CD8-positive, alpha-beta memory T cell (primary cell): ENCODE measurements at regions of chr10 and their contacts with region 1.

Region 1: DNA sequence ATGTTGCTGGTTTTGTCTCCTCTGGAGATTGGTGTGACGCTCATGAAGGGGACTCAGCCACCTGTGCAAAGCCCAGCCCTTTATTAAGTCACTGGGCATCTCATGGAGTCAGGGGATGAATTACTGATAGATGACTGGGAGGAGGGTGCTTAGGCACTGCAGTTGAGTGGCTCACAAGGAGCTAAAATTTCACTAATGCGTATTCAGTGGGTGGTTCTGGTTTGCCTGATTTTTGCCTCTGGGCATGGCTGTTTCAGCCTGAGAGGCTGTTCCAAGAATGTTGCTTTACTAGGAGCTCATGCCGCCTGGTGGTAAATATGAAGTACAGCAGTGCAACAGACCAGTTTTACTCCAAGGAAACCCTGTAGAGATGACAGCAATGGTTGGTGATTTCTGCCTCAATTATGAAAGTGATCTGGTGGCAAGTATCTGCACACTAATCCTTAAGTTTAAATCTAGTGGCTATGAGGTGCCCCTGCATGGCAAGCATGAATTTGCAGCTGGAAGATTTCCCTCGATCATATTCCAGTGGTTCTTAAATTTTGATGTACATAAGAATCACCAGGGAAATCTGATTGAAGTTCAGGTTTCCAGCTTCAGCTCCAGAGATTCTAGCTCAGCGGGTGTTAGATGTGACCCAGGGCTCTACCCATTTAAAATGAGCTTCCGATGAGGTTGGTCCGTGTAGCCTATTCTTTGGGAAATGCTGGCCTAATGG is 19.9 kb downstream of the ACTA2 start:
- DNase-seq: peak in 3 of 5 donors; percentile 34 to 53 (median 35)
- H3K4me3 ChIP-seq: no peak overlapping the region
- H3K4me3 Mint-ChIP-seq: no peak overlapping the region
- H3K27ac ChIP-seq: no peak overlapping the region
- H3K27ac Mint-ChIP-seq: peak overlapping the region in 4 of 8 donors; percentile 7 to 93 (median 30)
- H3K4me1 ChIP-seq: peaks cover 11% of the 10 kb centered on the region
- H3K4me1 Mint-ChIP-seq: peaks cover 12 to 20% (median 18%) of the 10 kb centered on the region in 3 donors
- H3K27me3 ChIP-seq: no peaks in the 10 kb centered on the region
- H3K27me3 Mint-ChIP-seq: no peaks in the 10 kb centered on the region

Region 2: GRCh38 chr10:88820748-88821389 is 111.8 kb before region 1 on chr10:
- CTCF ChIA-PET with region 1: interaction called, 10 read pairs
- POLR2A ChIA-PET with region 1: no interaction called
- DNase-seq: no peak
- H3K4me3 ChIP-seq: no peak overlapping the region
- H3K4me3 Mint-ChIP-seq: no peak overlapping the region
- H3K27ac ChIP-seq: no peak overlapping the region
- H3K27ac Mint-ChIP-seq: peak overlapping the region in 2 of 8 donors; percentile 6 to 36
- H3K4me1 ChIP-seq: peaks cover 33% of the 10 kb centered on the region
- H3K4me1 Mint-ChIP-seq: peaks cover 36 to 72% (median 63%) of the 10 kb centered on the region in 3 donors
- H3K27me3 ChIP-seq: no peaks in the 10 kb centered on the region
- H3K27me3 Mint-ChIP-seq: no peaks in the 10 kb centered on the region

Region 3: GRCh38 chr10:88990384-88991160 is 57.9 kb after region 1 on chr10 and contains the start of gene FAS:
- CTCF ChIA-PET with region 1: interaction called, 40 read pairs
- POLR2A ChIA-PET with region 1: interaction called, 4 read pairs
- DNase-seq: peak; percentile 64 to 88 (median 77)
- H3K4me3 ChIP-seq: peak within 1 kb of the TSS; percentile 88
- H3K4me3 Mint-ChIP-seq: peak within 1 kb of the TSS; percentile 93 to 100 (median 99)
- H3K27ac ChIP-seq: peak within 1 kb of the TSS; percentile 83
- H3K27ac Mint-ChIP-seq: peak within 1 kb of the TSS; percentile 91 to 99 (median 97)
- H3K4me1 ChIP-seq: peaks cover 65% of the 10 kb centered on the region
- H3K4me1 Mint-ChIP-seq: peaks cover 65 to 83% (median 75%) of the 10 kb centered on the region in 3 donors
- H3K27me3 ChIP-seq: no peaks in the 10 kb centered on the region
- H3K27me3 Mint-ChIP-seq: no peaks in the 10 kb centered on the region
- total RNA-seq, gene FAS: 77.9 to 78.5 TPM

Region 4: DNA sequence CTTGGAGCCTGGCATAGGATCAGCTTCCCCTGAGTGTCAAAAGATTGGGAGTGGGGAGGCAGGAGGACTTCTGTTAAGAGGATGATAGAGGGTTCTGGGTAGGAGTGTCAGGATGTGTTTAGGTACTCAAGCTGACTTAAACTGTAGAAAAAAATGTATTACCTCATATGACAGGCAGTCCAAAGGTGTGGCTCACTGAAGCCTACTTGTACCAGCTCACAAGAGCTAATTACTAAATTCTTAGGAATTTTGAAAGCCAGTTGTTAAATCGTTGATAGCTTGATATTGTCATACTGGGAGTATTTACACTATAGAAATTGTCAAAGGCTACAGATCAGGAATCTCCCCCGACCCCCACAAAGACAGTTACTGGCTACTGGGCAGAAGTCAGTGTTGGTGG is 90.0 kb after region 1 on chr10:
- CTCF ChIA-PET with region 1: interaction called, 15 read pairs
- POLR2A ChIA-PET with region 1: no interaction called
- DNase-seq: no peak
- H3K4me3 ChIP-seq: no peak overlapping the region
- H3K4me3 Mint-ChIP-seq: no peak overlapping the region
- H3K27ac ChIP-seq: no peak overlapping the region
- H3K27ac Mint-ChIP-seq: peak overlapping the region in 4 of 8 donors; percentile 1 to 80 (median 38)
- H3K4me1 ChIP-seq: no peaks in the 10 kb centered on the region
- H3K4me1 Mint-ChIP-seq: peaks cover 0 to 1% (median 0%) of the 10 kb centered on the region in 3 donors
- H3K27me3 ChIP-seq: no peaks in the 10 kb centered on the region
- H3K27me3 Mint-ChIP-seq: no peaks in the 10 kb centered on the region

Region 5: DNA sequence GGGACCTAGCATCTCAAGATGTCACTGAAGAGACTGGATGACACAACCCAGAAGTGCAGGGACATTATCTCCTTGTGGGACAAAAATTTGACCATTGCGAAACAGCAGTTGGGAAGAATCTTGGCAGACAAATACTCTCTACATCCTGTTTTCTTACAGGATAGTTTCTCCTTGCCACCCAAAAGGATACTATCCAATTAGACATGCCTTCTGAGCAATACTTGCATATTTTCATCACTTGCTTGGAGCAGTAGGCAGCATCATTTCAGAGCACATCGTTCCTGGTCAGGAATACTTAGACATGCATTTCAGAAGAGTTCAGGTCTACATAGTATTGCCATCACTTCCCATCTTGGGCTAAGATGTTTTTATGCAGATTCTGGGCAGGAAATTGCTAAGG is 114.7 kb after region 1 on chr10:
- CTCF ChIA-PET with region 1: no interaction called
- POLR2A ChIA-PET with region 1: no interaction called
- DNase-seq: no peak
- H3K4me3 ChIP-seq: no peak overlapping the region
- H3K4me3 Mint-ChIP-seq: no peak overlapping the region
- H3K27ac ChIP-seq: no peak overlapping the region
- H3K27ac Mint-ChIP-seq: no peak overlapping the region
- H3K4me1 ChIP-seq: no peaks in the 10 kb centered on the region
- H3K4me1 Mint-ChIP-seq: no peaks in the 10 kb centered on the region
- H3K27me3 ChIP-seq: no peaks in the 10 kb centered on the region
- H3K27me3 Mint-ChIP-seq: no peaks in the 10 kb centered on the region

Region 6: GRCh38 chr10:89207181-89207800 is 274.6 kb after region 1 on chr10 and contains the start of gene CH25H:
- CTCF ChIA-PET with region 1: interaction called, 32 read pairs
- POLR2A ChIA-PET with region 1: no interaction called
- DNase-seq: peak; percentile 20 to 53 (median 31)
- H3K4me3 ChIP-seq: peak within 1 kb of the TSS; percentile 66
- H3K4me3 Mint-ChIP-seq: peak within 1 kb of the TSS; percentile 79 to 91 (median 83)
- H3K27ac ChIP-seq: no peak within 1 kb of the TSS
- H3K27ac Mint-ChIP-seq: peak within 1 kb of the TSS in 5 of 8 donors; percentile 54 to 89 (median 77)
- H3K4me1 ChIP-seq: peaks cover 19% of the 10 kb centered on the region
- H3K4me1 Mint-ChIP-seq: peaks cover 10 to 15% (median 15%) of the 10 kb centered on the region in 3 donors
- H3K27me3 ChIP-seq: peaks cover 19% of the 10 kb centered on the region
- H3K27me3 Mint-ChIP-seq: peaks cover 19 to 48% of the 10 kb centered on the region in 2 donors
- total RNA-seq, gene CH25H: not detected